Activated CD4-positive, alpha-beta memory T cell treated with anti-CD3 and anti-CD28 coated beads, Interleukin-2, amount 10 ng/mL, durations not matched to agents 7 days and 5 days (primary cell): ENCODE measurements at regions of chr2 and their contacts with region 1.

Region 1: DNA sequence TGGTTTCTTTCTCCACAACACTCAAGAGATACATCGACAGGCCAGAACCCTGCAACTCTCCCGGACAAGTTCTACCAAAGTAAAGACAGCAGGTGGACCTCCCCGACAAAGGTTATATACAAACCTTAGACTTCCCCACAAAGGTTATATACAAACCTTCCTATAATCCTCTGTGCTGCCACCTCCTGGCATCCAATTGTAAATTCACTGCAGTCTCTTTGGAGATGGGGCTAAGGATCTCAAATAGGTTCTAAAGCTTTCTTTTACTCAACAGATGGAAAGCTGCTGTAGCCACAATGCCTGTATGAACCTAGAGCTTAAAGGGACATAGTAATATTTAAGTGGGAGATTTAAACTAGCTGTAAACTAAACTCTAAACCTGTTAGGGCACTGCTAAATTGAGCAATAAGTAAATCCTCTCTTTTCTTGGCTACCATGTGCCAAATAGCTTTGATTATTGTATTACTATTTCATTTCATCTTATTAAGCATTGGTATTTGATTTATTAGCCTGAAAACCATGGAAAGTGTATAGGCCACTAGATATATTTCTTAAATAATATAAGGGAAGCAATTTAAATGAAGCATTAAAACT is 9.8 kb upstream of the MREG start:
- DNase-seq: peak; percentile 59
- H3K4me3 Mint-ChIP-seq: no peak overlapping the region
- H3K27ac Mint-ChIP-seq: no peak overlapping the region
- H3K4me1 Mint-ChIP-seq: peaks cover 6% of the 10 kb centered on the region
- H3K27me3 Mint-ChIP-seq: no peaks in the 10 kb centered on the region

Region 2: DNA sequence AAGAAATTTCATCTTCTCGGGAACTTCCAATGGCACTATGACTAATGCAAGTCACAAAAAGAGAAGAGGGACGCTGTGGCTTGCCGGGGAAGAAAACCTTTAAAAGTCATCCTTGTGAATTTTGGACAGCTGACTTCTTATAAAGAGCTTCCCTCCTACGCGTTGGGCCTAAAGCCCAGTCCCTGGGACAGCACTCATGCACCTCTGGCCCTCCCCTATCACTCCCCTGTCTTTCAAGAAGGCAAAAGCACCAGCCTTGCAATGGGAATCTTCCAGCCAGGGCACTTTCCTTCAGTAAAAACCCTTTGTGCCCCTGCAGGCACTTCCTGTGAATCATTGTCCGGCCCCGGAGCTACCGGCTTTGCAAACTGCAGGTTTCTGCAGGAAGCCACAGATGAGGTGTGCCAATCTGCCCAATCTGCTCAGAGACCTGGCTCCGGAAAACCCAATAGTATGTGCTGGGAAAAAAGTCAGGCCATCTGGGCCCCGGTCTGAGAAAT is 16.9 kb before region 1 on chr2:
- CTCF ChIA-PET with region 1: interaction called, 10 read pairs
- POLR2A ChIA-PET with region 1: interaction called, 4 read pairs
- DNase-seq: peak; percentile 65
- H3K4me3 Mint-ChIP-seq: peak overlapping the region; percentile 53
- H3K27ac Mint-ChIP-seq: peak overlapping the region; percentile 84
- H3K4me1 Mint-ChIP-seq: peaks cover 63% of the 10 kb centered on the region
- H3K27me3 Mint-ChIP-seq: no peaks in the 10 kb centered on the region

Region 3: DNA sequence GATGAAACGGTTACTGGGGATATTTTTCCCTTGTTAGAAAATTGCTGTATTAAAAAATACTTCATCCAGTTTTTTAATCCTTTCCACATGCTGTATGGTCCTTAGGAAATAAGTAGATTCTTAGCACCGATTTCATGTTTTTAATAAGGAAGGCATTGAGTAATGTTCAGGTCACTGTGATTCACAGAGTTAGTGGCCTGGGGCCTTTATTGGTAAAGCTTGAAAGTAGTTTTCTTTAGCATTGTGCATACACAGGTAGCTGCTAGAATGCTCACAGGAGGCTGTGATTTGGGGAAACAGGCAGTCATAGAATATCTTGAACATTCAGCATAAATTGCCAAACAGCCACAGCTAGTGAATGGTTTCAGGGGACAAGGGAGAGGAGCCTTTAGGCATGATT is 165.8 kb after region 1 on chr2:
- CTCF ChIA-PET with region 1: no interaction called
- POLR2A ChIA-PET with region 1: no interaction called
- DNase-seq: no peak
- H3K4me3 Mint-ChIP-seq: no peak overlapping the region
- H3K27ac Mint-ChIP-seq: no peak overlapping the region
- H3K4me1 Mint-ChIP-seq: peaks cover 57% of the 10 kb centered on the region
- H3K27me3 Mint-ChIP-seq: no peaks in the 10 kb centered on the region